Transverse colon (tissue), 4 donors: ENCODE measurements at regions of chr2 and their contacts with region 1.

Region 1: DNA sequence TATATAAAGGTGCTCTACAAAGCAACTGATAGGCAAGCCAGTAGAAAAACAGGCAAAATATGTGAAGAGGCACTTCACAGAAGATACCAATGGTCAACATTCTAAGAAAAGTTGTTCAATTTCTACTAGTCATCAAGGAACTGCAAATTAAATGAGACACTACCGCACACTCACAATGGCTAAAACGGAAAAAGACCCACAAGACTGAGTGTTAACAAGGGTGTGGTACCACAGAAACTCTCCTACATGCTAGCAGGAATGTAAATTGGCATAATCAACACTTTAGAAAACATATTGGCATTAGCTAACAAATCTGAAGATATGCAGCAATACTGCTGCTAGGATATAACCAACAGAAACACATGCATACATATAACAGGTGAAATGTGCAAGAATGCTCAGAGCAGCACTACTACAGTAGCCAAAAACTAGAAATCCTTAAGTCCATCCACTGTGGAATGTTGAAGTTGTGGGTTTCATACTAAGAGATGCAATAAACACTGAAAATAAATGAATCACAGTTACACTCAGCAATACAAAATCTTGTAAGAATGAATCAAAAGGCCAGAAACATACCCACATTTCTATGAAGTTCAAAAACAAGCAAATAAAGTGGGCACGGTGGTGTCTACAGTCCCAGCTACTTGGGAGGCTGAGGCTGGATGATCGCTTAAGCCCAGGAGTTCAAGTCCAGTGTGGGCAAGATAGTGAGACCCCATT is 9.2 kb downstream of the RNU4ATAC start:
- DNase-seq: no peak
- H3K4me3 ChIP-seq: no peak overlapping the region
- H3K27ac ChIP-seq: no peak overlapping the region
- H3K4me1 ChIP-seq: peaks cover 0 to 29% (median 12%) of the 10 kb centered on the region in 4 donors
- H3K27me3 ChIP-seq: no peaks in the 10 kb centered on the region
- CTCF ChIP-seq: no peak
- EP300 ChIP-seq: no peak
- POLR2A ChIP-seq: no peak

Region 2: GRCh38 chr2:120983344-120983743 is 556.6 kb before region 1 on chr2:
- in situ Hi-C with region 1: no loop called
- intact Hi-C with region 1: no loop called
- DNase-seq: no peak
- H3K4me3 ChIP-seq: no peak overlapping the region
- H3K27ac ChIP-seq: no peak overlapping the region
- H3K4me1 ChIP-seq: no peaks in the 10 kb centered on the region
- H3K27me3 ChIP-seq: no peaks in the 10 kb centered on the region
- CTCF ChIP-seq: no peak
- EP300 ChIP-seq: no peak
- POLR2A ChIP-seq: no peak

Region 3: DNA sequence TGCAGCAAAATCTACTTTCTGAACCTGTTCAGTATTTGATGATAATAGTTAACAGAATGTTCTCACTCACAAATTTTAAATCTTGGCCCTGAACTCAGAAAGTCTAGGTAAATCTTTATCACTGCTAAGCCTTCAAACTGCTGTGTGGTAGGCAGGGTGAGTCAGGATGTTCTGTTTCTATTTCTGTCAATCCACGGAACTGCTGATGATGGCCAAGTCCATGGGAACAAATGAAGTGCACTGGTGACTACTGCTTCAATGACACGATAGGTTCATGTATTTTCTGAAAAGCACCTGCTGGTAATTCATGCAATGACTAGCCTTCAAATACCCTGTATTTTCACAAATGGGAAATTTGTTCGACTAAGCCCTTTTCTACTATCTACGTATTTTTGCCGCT is 182.6 kb after region 1 on chr2:
- in situ Hi-C with region 1: loop called in 3 of 4 experiments (anchors 10 to 25 kb)
- intact Hi-C with region 1: loop called (anchors 10 kb)
- DNase-seq: no peak
- H3K4me3 ChIP-seq: no peak overlapping the region
- H3K27ac ChIP-seq: no peak overlapping the region
- H3K4me1 ChIP-seq: peaks cover 0 to 7% (median 0%) of the 10 kb centered on the region in 4 donors
- H3K27me3 ChIP-seq: no peaks in the 10 kb centered on the region
- CTCF ChIP-seq: no peak
- EP300 ChIP-seq: no peak
- POLR2A ChIP-seq: no peak